ENCODE measurements at regions of chr5 and their contacts with region 1.

Region 1: DNA sequence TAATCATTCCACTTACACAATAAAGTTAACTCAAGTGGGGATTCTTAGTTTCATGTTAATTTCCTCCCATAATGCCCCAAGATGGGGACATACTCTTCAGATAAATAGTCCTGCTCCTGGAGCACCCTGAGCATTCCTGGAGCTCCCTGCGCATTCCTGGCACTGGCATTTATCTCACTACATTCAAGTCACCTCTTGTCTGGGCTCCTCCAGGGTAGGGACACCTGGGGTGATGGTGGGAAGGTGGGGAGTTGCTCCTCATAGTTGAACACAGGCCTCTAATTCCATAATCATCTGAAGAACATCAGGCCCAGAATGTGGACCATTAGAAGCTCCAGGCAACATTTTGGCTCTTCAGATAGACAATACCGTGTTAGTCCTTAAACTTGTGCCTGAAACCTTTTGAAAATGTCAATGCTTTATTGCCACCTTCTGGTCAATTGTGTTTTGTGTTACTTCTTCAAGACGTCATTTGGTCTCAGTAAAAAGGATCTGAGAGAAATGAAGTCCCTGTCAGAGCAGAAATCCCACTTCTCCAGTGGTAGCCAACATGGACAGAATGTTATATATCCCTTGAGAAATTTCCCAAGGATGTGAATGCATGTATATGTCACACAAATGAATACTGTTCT is 14.2 kb upstream of the AGGF1 start:
- DNase-seq: no peak
- ATAC-seq: peak; percentile 45
- H3K4me3 Mint-ChIP-seq: no peak overlapping the region
- H3K27ac Mint-ChIP-seq: no peak overlapping the region
- H3K4me1 Mint-ChIP-seq: peaks cover 8% of the 10 kb centered on the region
- H3K27me3 Mint-ChIP-seq: peaks cover 16% of the 10 kb centered on the region
- CTCF ChIP-seq: no peak

Region 2: DNA sequence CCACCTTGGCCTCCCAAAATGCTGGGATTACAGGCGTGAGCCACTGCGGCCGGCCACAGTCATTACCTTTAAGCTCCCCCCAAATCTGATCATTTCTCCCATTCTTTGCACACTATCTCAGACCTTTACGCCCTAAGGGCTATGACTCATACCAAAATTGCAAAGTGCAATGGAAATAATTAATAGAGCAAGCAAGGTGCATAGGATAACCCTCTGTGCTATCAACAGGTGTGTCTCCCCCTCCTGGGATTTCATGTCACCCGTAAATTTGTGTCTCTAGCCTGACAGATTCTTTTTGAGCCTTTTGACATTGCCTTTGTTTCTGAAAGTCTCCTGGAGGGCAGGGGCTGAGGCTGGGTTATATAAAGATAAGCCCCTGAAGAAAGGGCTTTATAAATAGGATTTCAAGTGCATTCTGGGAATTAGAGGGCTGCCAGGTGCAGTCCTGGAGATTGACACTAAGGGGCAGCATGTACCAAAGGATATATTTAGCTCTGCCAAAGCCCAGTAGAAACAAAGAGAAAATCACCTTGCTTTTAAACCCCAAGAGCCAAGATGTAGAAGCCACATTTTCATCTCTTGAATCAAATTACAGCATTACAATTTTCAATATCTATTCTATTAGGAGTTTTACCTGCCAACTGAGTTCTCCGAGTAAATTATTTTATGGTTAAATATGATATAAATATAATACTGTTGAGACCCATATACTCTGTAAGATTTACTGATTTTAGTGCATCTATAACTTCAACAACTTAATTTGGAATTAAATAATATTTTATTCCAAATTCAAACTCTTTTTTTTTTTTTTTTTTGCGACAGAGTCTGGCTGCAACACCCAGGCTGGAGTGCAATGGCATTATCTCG is 148.0 kb before region 1 on chr5:
- CTCF ChIA-PET with region 1: interaction called, 10 read pairs
- POLR2A ChIA-PET with region 1: no interaction called
- intact Hi-C with region 1: loop called (anchors 2 kb)
- DNase-seq: peak; percentile 82
- ATAC-seq: peak; percentile 96
- H3K4me3 Mint-ChIP-seq: no peak overlapping the region
- H3K27ac Mint-ChIP-seq: no peak overlapping the region
- H3K4me1 Mint-ChIP-seq: peaks cover 3% of the 10 kb centered on the region
- H3K27me3 Mint-ChIP-seq: no peaks in the 10 kb centered on the region
- CTCF ChIP-seq: peak; percentile 71

Region 3: DNA sequence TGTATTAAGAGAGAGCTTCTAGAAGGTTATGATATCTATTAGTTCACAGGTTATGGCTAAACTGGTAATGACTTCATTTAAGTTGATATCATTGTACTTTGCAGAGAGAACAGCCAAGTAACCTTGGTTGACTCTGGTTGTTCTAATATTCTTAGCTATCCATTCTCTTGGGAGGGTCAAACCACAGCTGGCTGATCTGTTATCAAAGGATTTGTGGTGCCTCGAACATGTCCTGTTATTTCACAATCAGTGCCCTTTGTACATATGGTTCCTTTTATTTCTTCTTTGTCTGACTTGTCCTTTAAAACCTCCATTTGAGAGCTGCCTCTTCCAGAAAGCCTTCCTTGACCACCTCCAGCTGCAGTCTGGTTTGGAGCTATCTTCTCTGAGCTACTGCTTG is 256.2 kb after region 1 on chr5:
- CTCF ChIA-PET with region 1: no interaction called
- POLR2A ChIA-PET with region 1: no interaction called
- intact Hi-C with region 1: no loop called
- DNase-seq: no peak
- ATAC-seq: no peak
- H3K4me3 Mint-ChIP-seq: no peak overlapping the region
- H3K27ac Mint-ChIP-seq: no peak overlapping the region
- H3K4me1 Mint-ChIP-seq: peaks cover under 1% of the 10 kb centered on the region
- H3K27me3 Mint-ChIP-seq: peaks cover 7% of the 10 kb centered on the region
- CTCF ChIP-seq: no peak

Measured in activated CD8-positive, alpha-beta T cell treated with anti-CD3 and anti-CD28 coated beads for 36 hours (primary cell).